Breast epithelium (tissue), 4 donors: ENCODE measurements at regions of chr1 and their contacts with region 1.

Region 1: GRCh38 chr1:183089025-183089639 is 65.9 kb downstream of the LAMC1 start:
- DNase-seq: no peak
- H3K4me3 ChIP-seq: no peak overlapping the region
- H3K27ac ChIP-seq: no peak overlapping the region
- H3K4me1 ChIP-seq: no peaks in the 10 kb centered on the region
- H3K27me3 ChIP-seq: no peaks in the 10 kb centered on the region
- CTCF ChIP-seq: no peak
- POLR2A ChIP-seq: no peak

Region 2: GRCh38 chr1:183926983-183927382 is 837.9 kb after region 1 on chr1:
- intact Hi-C with region 1: loop called (anchors 5 kb)
- DNase-seq: no peak
- H3K4me3 ChIP-seq: no peak overlapping the region
- H3K27ac ChIP-seq: no peak overlapping the region
- H3K4me1 ChIP-seq: peaks cover 0 to 1% of the 10 kb centered on the region in 2 donors
- H3K27me3 ChIP-seq: no peaks in the 10 kb centered on the region
- CTCF ChIP-seq: no peak
- POLR2A ChIP-seq: no peak